Ascending aorta (tissue), 2 donors: ENCODE measurements at regions of chr22 and their contacts with region 1.

Region 1: GRCh38 chr22:19432133-19432851 is at the start of gene MRPL40:
- DNase-seq: peak; percentile 56 to 94
- H3K4me3 ChIP-seq: peak within 1 kb of the TSS; percentile 66 to 99
- H3K27ac ChIP-seq: peak within 1 kb of the TSS; percentile 95 to 98
- H3K4me1 ChIP-seq: peaks cover 0 to 22% of the 10 kb centered on the region in 2 donors
- H3K27me3 ChIP-seq: no peaks in the 10 kb centered on the region
- CTCF ChIP-seq: no peak
- total RNA-seq, gene MRPL40: 14.7 TPM

Region 2: DNA sequence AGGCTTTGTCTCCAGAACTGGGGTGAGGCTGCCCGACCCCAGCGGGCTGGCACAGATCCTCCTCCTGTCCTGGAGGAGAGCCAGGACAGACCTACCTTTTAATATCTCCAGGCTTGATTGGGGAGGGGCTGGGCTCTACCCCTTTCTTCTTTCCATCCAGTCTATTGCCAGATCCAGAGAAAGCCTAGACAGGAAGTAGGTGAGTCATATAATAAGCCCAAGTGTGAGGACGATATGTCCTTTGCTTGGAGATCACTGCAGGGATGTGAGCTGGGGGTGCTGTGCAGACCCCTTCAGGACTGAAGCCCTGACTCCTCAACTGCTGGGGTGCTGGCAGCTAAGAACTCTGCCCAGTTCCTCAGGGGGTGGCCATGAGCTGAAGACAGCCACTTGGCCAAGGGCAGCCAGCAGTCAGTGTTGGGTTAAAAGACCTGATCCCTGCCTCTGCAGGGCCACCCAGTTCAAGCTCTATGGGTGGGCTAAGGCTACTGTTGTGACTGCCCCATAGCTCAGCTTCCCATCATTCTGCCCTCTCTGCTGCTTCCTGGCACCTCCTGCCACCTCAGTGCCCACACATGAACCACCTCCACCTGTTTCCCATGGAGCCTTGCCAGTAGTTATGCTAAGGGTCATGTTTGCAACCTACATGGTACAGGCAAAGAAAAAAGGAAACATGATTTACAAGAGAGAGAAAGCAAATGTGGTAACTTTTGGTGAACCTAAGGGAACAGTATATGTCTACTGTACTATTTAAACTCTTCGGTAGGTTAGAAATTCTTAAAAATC is 23.5 kb after region 1 on chr22:
- intact Hi-C with region 1: no loop called
- DNase-seq: peak in 1 of 2 donors; percentile 50
- H3K4me3 ChIP-seq: no peak overlapping the region
- H3K27ac ChIP-seq: no peak overlapping the region
- H3K4me1 ChIP-seq: no peaks in the 10 kb centered on the region
- H3K27me3 ChIP-seq: no peaks in the 10 kb centered on the region
- CTCF ChIP-seq: no peak

Region 3: GRCh38 chr22:19479357-19480172 is 47.3 kb after region 1 on chr22 and contains the start of gene CDC45:
- intact Hi-C with region 1: loop called (anchors 1 kb)
- DNase-seq: peak; percentile 90 to 98
- H3K4me3 ChIP-seq: peak within 1 kb of the TSS; percentile 84 to 85
- H3K27ac ChIP-seq: peak within 1 kb of the TSS; percentile 87 to 98
- H3K4me1 ChIP-seq: peaks cover 3 to 11% of the 10 kb centered on the region in 2 donors
- H3K27me3 ChIP-seq: no peaks in the 10 kb centered on the region
- CTCF ChIP-seq: no peak
- total RNA-seq, gene CDC45: not detected

Region 4: DNA sequence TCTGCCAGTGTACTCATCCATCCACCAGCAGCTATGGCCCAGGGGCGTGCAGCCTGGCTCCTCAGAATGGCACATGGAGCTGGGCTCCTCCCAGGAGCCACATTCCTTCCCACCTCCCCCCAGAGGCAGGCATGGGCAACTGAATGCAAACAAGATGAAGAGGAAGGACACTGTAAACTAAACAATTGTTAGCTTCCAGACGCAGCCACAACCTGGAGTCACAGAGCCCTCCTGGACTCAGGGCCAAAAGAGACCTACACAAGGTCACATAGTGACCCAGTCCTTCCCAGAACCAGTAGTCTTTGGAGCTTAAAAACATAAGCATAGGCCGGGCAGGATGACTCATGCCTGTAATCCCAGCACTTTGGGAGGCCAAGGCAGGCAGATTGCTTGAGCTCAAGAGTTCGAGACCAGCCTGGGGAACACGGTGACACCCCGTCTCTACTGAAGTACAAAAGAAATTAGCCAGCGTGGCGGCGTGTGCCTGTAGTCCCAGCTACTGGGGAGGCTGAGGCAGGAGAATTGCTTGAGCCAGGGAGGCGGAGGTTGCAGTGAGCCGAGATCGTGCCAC is 122.6 kb after region 1 on chr22:
- intact Hi-C with region 1: no loop called
- DNase-seq: no peak
- H3K4me3 ChIP-seq: no peak overlapping the region
- H3K27ac ChIP-seq: no peak overlapping the region
- H3K4me1 ChIP-seq: no peaks in the 10 kb centered on the region
- H3K27me3 ChIP-seq: no peaks in the 10 kb centered on the region
- CTCF ChIP-seq: no peak